Activated B cell treated with CpG ODN at 0.5 μM for 24 hours (primary cell): ENCODE measurements at regions of chr5 and their contacts with region 1.

Region 1: DNA sequence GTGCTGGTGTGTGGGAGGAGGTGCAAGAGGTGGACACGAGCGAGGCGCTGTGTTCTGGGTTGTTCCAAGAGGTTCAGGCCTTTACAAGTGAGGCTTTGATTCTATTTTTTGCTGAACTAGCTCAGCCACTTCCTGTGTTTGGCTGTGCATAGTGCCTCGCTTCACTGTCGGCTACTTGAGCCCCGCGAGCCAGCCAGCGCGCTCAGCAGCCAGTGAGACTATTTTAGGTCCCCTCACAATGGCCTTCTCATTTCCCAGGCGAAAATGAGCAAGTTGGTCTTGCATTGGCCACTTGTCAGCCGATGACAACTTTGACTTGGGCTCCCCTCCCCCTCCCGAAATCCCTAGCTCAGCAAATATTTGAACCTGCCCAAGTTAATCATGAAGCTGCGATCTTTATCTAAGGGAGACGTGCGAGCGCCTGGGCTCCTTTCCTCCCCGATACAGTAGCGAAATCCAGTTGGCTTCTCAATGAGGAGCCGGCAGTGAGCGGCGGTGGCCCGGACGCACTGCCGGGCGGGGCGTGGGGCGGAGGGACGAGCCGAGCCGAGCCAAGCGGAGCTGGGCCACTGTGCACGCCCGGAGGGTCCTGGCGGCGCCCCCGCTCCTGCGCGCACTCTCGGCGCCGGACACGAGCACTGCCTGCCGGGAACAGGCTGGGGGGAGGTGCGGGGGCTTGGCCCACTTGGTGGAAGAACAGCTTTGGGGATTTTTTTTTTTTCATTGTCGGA is 72.6 kb downstream of the PIK3R1 start:
- DNase-seq: peak; percentile 41
- ATAC-seq: peak; percentile 75
- H3K4me3 Mint-ChIP-seq: peak overlapping the region; percentile 90
- H3K27ac Mint-ChIP-seq: peak overlapping the region; percentile 89
- H3K4me1 Mint-ChIP-seq: peaks cover 41% of the 10 kb centered on the region
- H3K27me3 Mint-ChIP-seq: no peaks in the 10 kb centered on the region
- CTCF ChIP-seq: no peak

Region 2: GRCh38 chr5:68251804-68252522 is 36.2 kb before region 1 on chr5:
- CTCF ChIA-PET with region 1: no interaction called
- POLR2A ChIA-PET with region 1: no interaction called
- intact Hi-C with region 1: no loop called
- DNase-seq: no peak
- ATAC-seq: no peak
- H3K4me3 Mint-ChIP-seq: no peak overlapping the region
- H3K27ac Mint-ChIP-seq: peak overlapping the region; percentile 53
- H3K4me1 Mint-ChIP-seq: peaks cover 79% of the 10 kb centered on the region
- H3K27me3 Mint-ChIP-seq: no peaks in the 10 kb centered on the region
- CTCF ChIP-seq: no peak

Region 3: DNA sequence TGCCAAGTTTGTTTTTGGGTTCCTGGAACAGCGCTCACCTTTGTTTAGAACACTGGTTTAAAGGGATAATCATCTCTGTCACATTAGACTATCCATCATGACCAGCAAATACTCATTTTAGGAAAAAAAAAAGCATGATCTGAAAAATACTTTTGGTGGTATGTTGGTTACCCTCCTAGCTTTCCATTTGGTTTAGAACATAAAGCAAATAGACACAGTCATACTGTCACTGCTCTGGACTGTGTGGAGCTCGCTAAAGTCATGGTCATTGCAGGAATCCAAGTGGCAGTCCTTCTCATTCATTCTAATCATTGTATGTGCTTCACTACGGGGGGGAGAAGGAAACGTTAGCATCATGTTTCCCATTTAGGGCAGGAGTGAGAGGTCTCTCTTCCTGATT is 11.0 kb after region 1 on chr5:
- CTCF ChIA-PET with region 1: interaction called, 11 read pairs
- POLR2A ChIA-PET with region 1: no interaction called
- intact Hi-C with region 1: no loop called
- DNase-seq: no peak
- ATAC-seq: no peak
- H3K4me3 Mint-ChIP-seq: no peak overlapping the region
- H3K27ac Mint-ChIP-seq: no peak overlapping the region
- H3K4me1 Mint-ChIP-seq: no peaks in the 10 kb centered on the region
- H3K27me3 Mint-ChIP-seq: no peaks in the 10 kb centered on the region
- CTCF ChIP-seq: no peak

Region 4: GRCh38 chr5:68379275-68380036 is 91.3 kb after region 1 on chr5:
- CTCF ChIA-PET with region 1: no interaction called
- POLR2A ChIA-PET with region 1: no interaction called
- intact Hi-C with region 1: no loop called
- DNase-seq: no peak
- ATAC-seq: no peak
- H3K4me3 Mint-ChIP-seq: no peak overlapping the region
- H3K27ac Mint-ChIP-seq: no peak overlapping the region
- H3K4me1 Mint-ChIP-seq: peaks cover 32% of the 10 kb centered on the region
- H3K27me3 Mint-ChIP-seq: no peaks in the 10 kb centered on the region
- CTCF ChIP-seq: no peak

Region 5: DNA sequence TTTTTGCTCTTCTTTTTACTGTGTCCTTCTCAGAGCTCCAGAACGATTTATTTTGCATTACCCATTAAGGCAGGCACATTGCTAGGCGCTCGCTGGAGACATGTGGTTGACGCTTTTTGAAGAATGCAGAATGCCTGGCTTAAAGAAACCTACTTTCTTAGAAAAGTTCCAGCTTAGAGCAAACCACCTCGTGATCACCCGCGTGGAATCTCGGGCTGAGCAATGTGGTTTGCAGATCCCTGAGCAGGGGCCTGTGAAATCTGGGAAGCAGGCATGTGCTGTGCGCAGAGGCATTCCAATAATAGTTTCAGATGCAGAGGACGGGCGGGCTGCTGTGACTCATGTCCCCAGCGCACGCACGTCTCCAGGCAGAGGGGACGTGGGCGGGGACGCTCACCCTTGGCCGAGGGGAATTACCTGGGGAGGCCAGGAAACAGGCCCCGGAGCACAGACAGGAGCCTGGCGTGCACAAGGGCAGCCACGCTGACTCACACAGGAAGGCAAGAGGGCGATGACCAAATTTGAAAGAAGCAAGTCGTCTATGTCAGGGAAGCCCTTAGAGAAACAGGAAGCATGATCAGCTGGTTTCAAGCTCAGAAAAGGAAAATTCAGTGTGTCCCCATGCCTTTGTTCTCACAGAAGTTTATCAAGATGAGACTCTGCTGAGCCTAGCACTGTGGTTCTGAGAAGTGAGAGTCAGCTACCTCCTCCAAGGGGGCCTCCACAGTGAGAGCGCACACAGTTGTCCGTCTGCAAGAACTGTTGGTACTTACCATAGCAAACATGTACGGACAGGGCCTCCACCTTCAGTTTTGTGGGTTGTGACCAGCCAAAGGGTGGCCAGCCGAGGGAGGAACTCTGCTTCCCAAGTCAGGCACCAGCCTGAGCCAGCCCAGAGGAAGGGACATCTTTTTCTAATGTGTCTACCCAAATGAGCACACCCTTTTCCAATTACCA is 146.1 kb after region 1 on chr5:
- CTCF ChIA-PET with region 1: interaction called, 8 read pairs
- POLR2A ChIA-PET with region 1: interaction called, 15 read pairs
- intact Hi-C with region 1: loop called (anchors 1 kb)
- DNase-seq: peak; percentile 78
- ATAC-seq: peak; percentile 97
- H3K4me3 Mint-ChIP-seq: peak overlapping the region; percentile 71
- H3K27ac Mint-ChIP-seq: peak overlapping the region; percentile 85
- H3K4me1 Mint-ChIP-seq: peaks cover 39% of the 10 kb centered on the region
- H3K27me3 Mint-ChIP-seq: no peaks in the 10 kb centered on the region
- CTCF ChIP-seq: no peak

Region 6: DNA sequence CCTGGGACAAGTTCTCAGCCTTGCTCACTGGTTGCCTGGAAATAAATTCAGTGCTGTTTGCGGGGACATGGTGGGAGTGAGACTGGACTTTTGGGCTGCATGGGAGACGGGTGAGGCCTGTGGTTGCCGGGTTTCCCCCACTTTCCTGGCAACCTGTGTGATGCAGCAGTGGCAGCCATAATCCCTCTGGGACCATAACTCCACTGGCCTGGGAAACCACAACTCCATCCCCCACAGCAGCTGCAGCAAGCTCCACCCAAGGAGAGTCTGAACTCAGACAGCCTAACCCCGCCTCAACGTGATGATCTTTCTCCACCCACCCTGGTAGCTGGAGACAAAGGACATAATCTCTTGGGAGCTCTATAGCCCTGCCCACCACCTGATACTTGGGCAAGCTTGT is 277.3 kb after region 1 on chr5:
- CTCF ChIA-PET with region 1: interaction called, 3 read pairs
- POLR2A ChIA-PET with region 1: no interaction called
- intact Hi-C with region 1: loop called (anchors 1 kb)
- DNase-seq: peak; percentile 51
- ATAC-seq: peak; percentile 98
- H3K4me3 Mint-ChIP-seq: peak overlapping the region; percentile 45
- H3K27ac Mint-ChIP-seq: peak overlapping the region; percentile 71
- H3K4me1 Mint-ChIP-seq: peaks cover 22% of the 10 kb centered on the region
- H3K27me3 Mint-ChIP-seq: no peaks in the 10 kb centered on the region
- CTCF ChIP-seq: no peak

Region 7: DNA sequence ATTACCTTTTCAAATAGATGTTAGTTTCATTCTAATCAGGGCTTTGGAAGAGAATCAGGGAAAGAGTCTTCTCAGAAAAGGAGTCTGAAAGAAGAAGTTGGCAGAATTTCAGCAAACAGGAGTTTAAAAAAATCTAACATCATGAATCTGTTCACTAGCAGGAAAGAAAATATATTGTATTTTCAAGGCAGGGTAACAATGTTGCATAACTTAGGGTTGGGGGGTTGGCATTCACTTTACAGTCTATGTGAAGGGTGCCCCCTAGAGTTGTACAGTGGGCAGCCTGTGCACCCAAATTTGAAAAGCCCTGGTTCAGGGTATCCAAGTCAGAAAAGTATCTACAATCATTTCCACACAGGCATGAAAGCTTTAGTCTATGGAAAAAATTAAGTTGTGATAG is 457.3 kb after region 1 on chr5:
- CTCF ChIA-PET with region 1: interaction called, 3 read pairs
- POLR2A ChIA-PET with region 1: no interaction called
- intact Hi-C with region 1: loop called (anchors 1 kb)
- DNase-seq: no peak
- ATAC-seq: no peak
- H3K4me3 Mint-ChIP-seq: no peak overlapping the region
- H3K27ac Mint-ChIP-seq: no peak overlapping the region
- H3K4me1 Mint-ChIP-seq: peaks cover 21% of the 10 kb centered on the region
- H3K27me3 Mint-ChIP-seq: peaks cover 14% of the 10 kb centered on the region
- CTCF ChIP-seq: no peak

Region 8: DNA sequence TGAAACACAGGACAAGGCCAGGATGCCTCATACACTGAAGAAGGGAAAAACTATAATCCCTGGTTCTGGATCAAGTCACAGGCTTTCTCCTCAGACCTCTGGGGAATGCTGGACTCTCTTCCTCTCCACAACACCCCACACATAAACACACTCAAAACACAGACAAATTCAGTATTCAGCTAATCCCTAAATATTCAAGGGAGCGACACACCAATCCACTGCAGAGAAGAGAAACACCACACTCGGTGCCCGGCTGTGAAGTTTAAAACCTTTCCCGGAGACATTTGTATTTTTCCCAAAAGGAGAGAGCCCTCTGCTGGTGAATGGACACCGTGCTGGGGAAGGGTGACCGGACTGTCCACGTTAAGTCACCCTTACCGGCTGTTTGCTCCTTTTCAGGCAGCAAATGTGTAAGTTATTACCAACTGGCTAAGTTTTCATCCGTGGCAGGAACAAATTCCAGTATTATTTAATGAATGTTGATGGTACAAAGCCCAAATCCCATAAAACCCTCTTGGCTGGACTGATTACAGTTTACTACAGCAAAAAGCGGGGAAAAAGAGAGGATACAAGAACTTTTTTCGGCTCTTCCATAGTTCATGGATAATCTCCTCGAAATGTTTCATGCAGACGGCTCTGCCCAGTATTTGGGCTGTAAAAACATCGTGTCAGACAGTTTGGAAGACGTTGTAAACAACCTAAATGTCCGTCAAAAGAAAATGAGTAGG is 674.8 kb after region 1 on chr5:
- CTCF ChIA-PET with region 1: no interaction called
- POLR2A ChIA-PET with region 1: no interaction called
- intact Hi-C with region 1: loop called (anchors 1 kb)
- DNase-seq: no peak
- ATAC-seq: no peak
- H3K4me3 Mint-ChIP-seq: no peak overlapping the region
- H3K27ac Mint-ChIP-seq: no peak overlapping the region
- H3K4me1 Mint-ChIP-seq: peaks cover 4% of the 10 kb centered on the region
- H3K27me3 Mint-ChIP-seq: no peaks in the 10 kb centered on the region
- CTCF ChIP-seq: no peak

Region 9: DNA sequence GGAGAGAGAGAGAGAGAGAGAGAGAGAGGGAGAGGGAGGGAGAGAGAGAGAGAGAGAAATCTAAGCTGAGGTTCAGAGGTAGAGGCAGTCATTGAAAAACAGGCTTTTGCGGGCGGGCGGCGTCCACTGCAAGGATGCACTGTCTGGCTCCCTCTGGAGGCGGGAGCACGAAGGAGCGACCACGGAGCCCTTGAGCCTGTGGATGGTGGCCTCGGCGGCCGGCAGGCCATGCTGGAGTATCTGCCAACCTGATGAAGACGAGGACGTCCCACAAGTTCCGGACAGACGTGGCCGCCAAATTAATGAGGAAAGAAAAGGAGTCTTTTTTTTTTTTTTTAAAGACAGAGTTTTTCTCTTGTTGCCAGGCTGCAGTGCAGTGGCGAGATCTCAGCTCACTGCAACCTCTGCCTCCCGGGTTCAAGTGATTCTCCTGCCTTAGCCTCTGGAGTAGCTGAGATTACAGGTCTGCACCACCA is 1046.7 kb after region 1 on chr5:
- CTCF ChIA-PET with region 1: no interaction called
- POLR2A ChIA-PET with region 1: no interaction called
- intact Hi-C with region 1: loop called (anchors 10 kb)
- DNase-seq: peak; percentile 56
- ATAC-seq: peak; percentile 72
- H3K4me3 Mint-ChIP-seq: peak overlapping the region; percentile 46
- H3K27ac Mint-ChIP-seq: peak overlapping the region; percentile 59
- H3K4me1 Mint-ChIP-seq: peaks cover 25% of the 10 kb centered on the region
- H3K27me3 Mint-ChIP-seq: no peaks in the 10 kb centered on the region
- CTCF ChIP-seq: no peak